A549 (cell line): ENCODE measurements at regions of chr1 and their contacts with region 1.

Region 1: DNA sequence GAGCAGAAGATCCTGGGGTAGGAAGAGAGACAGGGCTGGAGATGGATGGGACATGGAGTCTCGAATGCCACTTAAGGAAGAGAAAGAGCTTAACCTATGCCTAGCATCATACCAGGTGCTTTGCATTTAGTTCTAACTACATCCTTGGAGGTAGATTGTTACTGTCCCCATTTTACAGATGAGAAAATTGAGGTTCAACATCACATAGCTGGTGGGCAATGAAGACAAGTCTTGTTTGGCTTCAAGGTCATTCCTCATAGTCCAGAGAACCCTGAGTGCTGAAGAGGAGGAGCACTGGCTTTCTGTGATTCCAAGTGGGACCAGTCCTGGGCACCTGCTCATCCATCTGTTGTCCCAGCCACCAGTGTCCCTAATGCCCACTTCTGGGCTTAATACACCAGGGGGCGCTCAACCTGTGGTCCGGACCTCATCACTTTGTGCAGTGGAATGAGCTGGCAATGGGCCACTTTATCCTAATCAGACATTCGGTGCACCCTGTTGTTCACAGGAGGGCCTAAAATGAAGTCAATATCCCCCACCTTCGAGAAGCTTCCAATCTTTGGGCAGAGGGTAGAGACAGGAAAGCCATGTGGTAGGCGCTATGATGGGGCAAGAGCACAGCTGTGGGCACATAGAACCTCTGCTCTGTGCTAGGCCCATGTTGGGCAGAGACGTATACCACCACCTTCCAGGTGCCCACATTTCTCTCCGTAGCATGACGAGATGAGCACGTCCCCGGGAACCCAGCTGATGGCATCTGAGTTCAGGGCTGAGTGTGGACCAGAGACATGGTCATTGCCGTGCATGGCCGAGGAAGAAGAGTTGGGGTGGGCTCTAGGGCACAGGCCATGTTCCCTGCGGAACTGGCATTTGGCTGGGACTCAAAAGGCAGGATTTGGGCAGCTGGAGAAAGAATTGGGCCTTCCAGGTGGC is 9.2 kb downstream of the RPS6KA1 start:
- DNase-seq: peak; percentile 44 to 51
- ATAC-seq: peak; percentile 40 to 72; a peak in 4 of 6 replicates
- H3K4me3 ChIP-seq: no peak overlapping the region
- H3K27ac ChIP-seq: no peak overlapping the region
- H3K4me1 ChIP-seq: peaks cover 12% of the 10 kb centered on the region; the same call in 1 of the 3 replicates
- CTCF ChIP-seq: peak; percentile 37
- EP300 ChIP-seq: no peak
- POLR2A ChIP-seq: no peak
- RAD21 ChIP-seq: no peak

Region 2: DNA sequence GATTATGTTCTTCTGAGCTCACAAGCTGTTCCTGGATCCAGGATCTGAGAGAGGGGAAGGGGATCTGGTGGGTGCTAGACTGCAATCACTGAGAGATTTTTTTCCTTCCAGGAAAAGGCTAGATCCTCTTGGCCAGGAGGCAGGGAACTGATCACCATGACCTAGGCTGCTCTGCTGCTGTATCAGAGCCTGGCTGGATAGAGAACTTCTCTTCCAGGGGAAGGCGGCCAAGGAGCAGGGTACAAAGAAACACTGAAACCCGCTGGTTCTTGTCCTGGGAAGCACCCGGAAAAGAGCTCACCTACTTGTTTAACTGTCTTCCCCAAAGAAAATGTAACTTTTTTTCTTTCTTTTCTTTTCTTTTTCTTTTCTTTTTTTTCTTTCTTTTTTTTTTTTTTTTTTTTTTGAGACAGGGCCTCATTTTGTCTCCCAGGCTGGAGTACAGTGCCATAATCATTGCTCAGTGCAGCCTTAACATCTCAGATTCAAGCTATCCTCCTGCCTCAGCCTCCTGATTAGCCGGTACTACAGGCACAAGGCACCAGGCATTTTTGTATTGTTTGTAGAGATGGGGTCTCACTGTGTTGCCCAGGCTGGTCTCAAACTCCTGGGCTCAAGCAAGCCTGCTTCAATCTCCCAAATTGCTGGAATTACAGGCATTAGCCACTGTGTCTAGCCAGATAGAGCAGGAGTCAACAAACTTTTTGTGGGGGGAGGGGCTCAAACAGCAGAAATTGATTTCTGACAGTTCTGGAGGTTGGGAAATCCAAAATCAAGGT is 21.6 kb before region 1 on chr1:
- CTCF ChIA-PET with region 1: no interaction called
- POLR2A ChIA-PET with region 1: no interaction called
- DNase-seq: no peak
- ATAC-seq: no peak
- H3K4me3 ChIP-seq: no peak overlapping the region
- H3K27ac ChIP-seq: no peak overlapping the region
- H3K4me1 ChIP-seq: no peaks in the 10 kb centered on the region
- CTCF ChIP-seq: no peak
- EP300 ChIP-seq: no peak
- POLR2A ChIP-seq: no peak
- RAD21 ChIP-seq: no peak

Region 3: DNA sequence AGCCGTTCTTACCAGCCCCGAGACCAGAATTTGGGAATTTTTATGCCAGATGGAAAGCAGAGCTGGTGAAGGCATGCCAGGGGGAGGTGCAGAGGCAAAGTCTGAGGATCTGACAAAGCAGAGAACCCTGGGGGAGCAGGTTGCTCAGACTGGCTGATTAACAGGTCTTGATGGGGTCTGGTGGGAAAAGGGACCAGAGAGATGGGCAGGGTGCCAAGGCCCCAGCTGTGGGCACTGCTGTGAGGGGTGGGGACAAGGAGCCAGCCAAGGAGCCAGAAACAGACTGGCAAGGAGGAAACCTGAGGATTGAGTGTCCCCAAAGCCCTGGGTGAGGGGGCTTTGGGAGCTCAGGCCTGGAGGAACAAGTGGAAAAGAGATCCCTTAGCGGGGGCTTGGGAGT is 12.2 kb after region 1 on chr1:
- CTCF ChIA-PET with region 1: interaction called, 14 read pairs
- POLR2A ChIA-PET with region 1: no interaction called
- DNase-seq: no peak
- ATAC-seq: no peak
- H3K4me3 ChIP-seq: no peak overlapping the region
- H3K27ac ChIP-seq: no peak overlapping the region
- H3K4me1 ChIP-seq: no peaks in the 10 kb centered on the region
- CTCF ChIP-seq: no peak
- EP300 ChIP-seq: no peak
- POLR2A ChIP-seq: no peak
- RAD21 ChIP-seq: no peak